T-cell (primary cell): ENCODE measurements at regions of chr5 and their contacts with region 1.

Region 1: DNA sequence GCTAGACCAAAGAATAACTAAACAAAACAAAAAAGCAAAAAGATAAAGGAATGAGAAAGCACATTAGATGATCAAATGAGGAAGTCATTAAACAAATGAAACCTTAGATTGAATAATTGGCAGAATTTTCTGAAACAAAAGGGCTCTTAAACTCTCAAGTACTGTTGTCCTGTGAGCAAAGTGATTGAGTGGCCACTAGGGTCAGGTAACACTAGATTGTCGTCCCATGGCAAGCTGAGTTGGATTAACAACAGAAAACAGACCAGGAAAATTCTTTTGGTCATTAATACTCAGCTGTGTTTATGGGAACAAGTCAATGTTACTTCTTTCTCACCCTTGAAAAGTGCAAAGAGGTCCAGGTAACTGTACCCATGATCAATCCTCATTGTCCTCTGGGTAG is 81.6 kb upstream of the MRPS30 start:
- DNase-seq: no peak
- ATAC-seq: no peak
- H3K4me3 ChIP-seq: no peak overlapping the region
- H3K4me3 Mint-ChIP-seq: no peak overlapping the region
- H3K27ac ChIP-seq: no peak overlapping the region
- H3K27ac Mint-ChIP-seq: no peak overlapping the region
- H3K4me1 ChIP-seq: no peaks in the 10 kb centered on the region
- H3K4me1 Mint-ChIP-seq: no peaks in the 10 kb centered on the region
- H3K27me3 ChIP-seq: no peaks in the 10 kb centered on the region
- H3K27me3 Mint-ChIP-seq: no peaks in the 10 kb centered on the region

Region 2: GRCh38 chr5:44691812-44692211 is 35.3 kb before region 1 on chr5:
- CTCF ChIA-PET with region 1: no interaction called
- POLR2A ChIA-PET with region 1: no interaction called
- DNase-seq: no peak
- ATAC-seq: no peak
- H3K4me3 ChIP-seq: no peak overlapping the region
- H3K4me3 Mint-ChIP-seq: no peak overlapping the region
- H3K27ac ChIP-seq: no peak overlapping the region
- H3K27ac Mint-ChIP-seq: no peak overlapping the region
- H3K4me1 ChIP-seq: no peaks in the 10 kb centered on the region
- H3K4me1 Mint-ChIP-seq: no peaks in the 10 kb centered on the region
- H3K27me3 ChIP-seq: no peaks in the 10 kb centered on the region
- H3K27me3 Mint-ChIP-seq: no peaks in the 10 kb centered on the region

Region 3: GRCh38 chr5:44919560-44919959 is 192.5 kb after region 1 on chr5:
- CTCF ChIA-PET with region 1: interaction called in 1 of 2 experiments, 10 read pairs
- POLR2A ChIA-PET with region 1: no interaction called
- DNase-seq: no peak
- ATAC-seq: no peak
- H3K4me3 ChIP-seq: no peak overlapping the region
- H3K4me3 Mint-ChIP-seq: no peak overlapping the region
- H3K27ac ChIP-seq: no peak overlapping the region
- H3K27ac Mint-ChIP-seq: no peak overlapping the region
- H3K4me1 ChIP-seq: no peaks in the 10 kb centered on the region
- H3K4me1 Mint-ChIP-seq: no peaks in the 10 kb centered on the region
- H3K27me3 ChIP-seq: no peaks in the 10 kb centered on the region
- H3K27me3 Mint-ChIP-seq: no peaks in the 10 kb centered on the region